AG04449 (cell line): ENCODE measurements at regions of chr2 and their contacts with region 1.

Region 1: GRCh38 chr2:152025678-152026287 is 73.1 kb downstream of the CACNB4 start:
- DNase-seq: peak; percentile 9
- H3K4me3 ChIP-seq: peak overlapping the region; percentile 39
- CTCF ChIP-seq: peak; percentile 99

Region 2: GRCh38 chr2:151937966-151938365 is 87.8 kb before region 1 on chr2:
- CTCF ChIA-PET with region 1: no interaction called
- POLR2A ChIA-PET with region 1: no interaction called
- DNase-seq: no peak
- H3K4me3 ChIP-seq: no peak overlapping the region
- CTCF ChIP-seq: no peak

Region 3: GRCh38 chr2:151999053-151999452 is 26.7 kb before region 1 on chr2:
- CTCF ChIA-PET with region 1: interaction called, 80 read pairs
- POLR2A ChIA-PET with region 1: no interaction called
- DNase-seq: no peak
- H3K4me3 ChIP-seq: no peak overlapping the region
- CTCF ChIP-seq: peak; percentile 77

Region 4: DNA sequence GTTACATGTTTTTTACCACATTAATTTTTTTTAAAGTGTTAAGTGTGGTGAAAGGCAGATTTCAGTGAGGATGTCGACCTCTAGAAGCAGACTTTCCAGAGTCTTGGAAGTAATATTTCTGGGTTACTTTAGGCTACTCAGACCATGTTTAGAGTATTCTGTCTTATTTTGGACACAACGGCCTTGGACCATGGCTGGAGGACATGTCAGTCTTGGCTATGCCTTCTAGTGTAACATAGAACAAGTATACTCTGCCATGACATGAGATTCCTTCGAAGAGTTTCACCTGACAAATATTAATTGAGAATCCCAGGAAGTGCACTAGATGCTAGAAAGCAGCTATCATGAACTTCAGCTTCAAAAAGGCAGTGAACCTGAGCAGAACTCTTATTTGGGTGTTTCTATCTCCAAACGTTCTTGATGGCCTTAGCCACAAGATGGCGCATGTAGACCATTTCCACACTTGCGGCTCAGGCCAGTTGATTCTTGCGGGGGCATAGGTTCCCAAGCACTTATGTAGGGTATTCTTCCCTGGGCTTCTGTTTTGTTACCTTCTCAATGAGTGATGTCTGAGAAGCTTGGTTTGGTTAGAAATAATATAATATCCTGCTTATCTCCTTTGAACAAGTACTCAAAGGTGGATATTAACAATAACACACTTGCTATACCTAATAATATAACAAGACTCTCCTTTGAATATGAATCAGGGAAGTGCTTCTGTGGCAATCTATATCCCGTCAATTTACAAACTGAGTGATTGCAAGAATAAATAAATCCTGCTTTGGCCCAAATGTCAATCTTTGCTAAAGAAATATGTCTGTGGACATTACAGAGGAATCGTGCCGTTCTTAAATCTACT is 11.1 kb after region 1 on chr2:
- CTCF ChIA-PET with region 1: interaction called, 75 read pairs
- POLR2A ChIA-PET with region 1: no interaction called
- DNase-seq: peak; percentile 16
- H3K4me3 ChIP-seq: no peak overlapping the region
- CTCF ChIP-seq: peak; percentile 77

Region 5: GRCh38 chr2:152047819-152048471 is 22.2 kb after region 1 on chr2:
- CTCF ChIA-PET with region 1: interaction called, 15 read pairs
- POLR2A ChIA-PET with region 1: no interaction called
- DNase-seq: no peak
- H3K4me3 ChIP-seq: no peak overlapping the region
- CTCF ChIP-seq: no peak

Region 6: GRCh38 chr2:152175458-152176325 is 149.9 kb after region 1 on chr2 and contains the start of gene STAM2:
- CTCF ChIA-PET with region 1: interaction called, 12 read pairs
- POLR2A ChIA-PET with region 1: no interaction called
- DNase-seq: peak; percentile 47
- H3K4me3 ChIP-seq: peak within 1 kb of the TSS; percentile 98
- CTCF ChIP-seq: peak; percentile 99

Region 7: DNA sequence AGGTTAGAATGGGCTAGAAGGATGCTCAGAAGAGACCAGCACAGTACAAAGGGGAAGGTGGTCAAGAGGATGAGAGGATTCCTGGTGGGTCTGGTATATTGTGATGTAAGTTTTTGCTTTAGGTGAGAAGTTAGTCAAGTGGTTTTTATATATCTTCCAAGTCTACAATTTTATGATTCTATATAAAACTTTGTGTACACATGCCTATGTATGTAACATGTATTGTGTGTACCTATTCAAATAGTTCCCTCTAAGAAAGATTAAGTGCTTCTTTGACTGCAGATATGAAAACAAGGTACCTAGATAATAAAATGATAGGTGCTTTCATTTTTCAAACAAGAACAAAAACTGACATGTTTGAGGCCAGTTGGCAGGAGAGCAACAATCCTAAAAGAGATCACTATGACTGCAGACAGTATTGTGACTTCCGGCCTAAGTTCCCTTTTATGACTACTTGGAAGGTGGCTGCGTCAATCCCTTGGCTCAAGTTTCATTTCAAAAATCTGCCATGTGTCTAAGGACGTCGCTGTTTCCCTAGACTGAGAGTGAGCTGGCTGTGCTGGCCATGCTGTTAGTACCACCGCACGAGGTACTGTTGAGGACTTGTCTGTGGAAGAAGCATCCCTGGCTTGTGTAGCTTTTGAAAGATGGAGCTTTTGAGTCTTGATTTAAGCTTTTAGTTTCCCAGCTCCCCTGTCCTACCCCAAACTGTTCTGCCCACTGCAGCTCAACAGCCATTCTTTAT is 568.4 kb after region 1 on chr2:
- CTCF ChIA-PET with region 1: no interaction called
- POLR2A ChIA-PET with region 1: no interaction called
- DNase-seq: no peak
- H3K4me3 ChIP-seq: no peak overlapping the region
- CTCF ChIP-seq: no peak